Dorsolateral prefrontal cortex (tissue), 120 donors: ENCODE measurements at regions of chr13 and their contacts with region 1.

Region 1: DNA sequence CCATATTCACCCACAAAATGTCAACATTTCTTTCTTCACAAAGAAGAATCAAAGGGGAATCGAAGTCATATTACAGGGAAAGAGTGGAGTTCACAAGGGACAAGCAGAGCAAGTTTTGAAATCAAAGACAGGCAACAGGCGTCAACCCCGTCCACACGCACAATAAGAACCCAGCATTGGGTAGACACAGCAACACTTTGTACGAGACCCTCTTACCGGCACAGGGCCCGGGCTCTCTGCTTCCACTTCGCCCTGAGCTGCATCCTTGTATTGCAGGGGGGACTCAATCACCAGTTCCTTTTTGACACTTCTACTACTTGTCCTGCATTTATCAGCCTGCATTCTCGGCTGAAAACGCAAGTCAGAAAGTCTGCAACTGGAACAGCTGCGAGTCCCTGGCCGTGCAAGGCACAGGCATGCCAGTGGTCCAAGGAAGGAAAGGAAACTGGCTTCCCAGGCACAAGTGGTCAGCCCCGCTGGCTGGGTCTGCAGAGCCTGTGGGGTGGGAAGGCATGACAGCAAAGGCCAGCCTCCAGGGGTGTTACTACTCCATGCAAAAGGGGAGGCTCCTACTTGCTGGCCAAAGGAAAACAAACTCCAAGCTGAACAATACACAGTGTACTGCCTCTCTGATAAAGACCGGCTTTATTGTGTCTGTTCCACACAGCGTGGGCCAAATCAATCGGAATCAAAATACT is at the start of gene DOCK9:
- DNase-seq: peak; percentile 34 to 90 (median 82)
- H3K4me3 ChIP-seq: peak within 1 kb of the TSS; percentile 24 to 79 (median 62)
- H3K27ac ChIP-seq: peak within 1 kb of the TSS; percentile 68 to 99 (median 94)
- H3K27me3 ChIP-seq: no peaks in the 10 kb centered on the region
- CTCF ChIP-seq: peak in 25 of 56 donors; percentile 6 to 49 (median 17)
- total RNA-seq, gene DOCK9: 92.4 to 354 (median 139) TPM

Region 2: GRCh38 chr13:98890186-98890585 is 87.5 kb before region 1 on chr13:
- intact Hi-C with region 1: loop called (anchors 10 kb)
- DNase-seq: peak in 9 of 10 donors; percentile 39 to 76 (median 64)
- H3K4me3 ChIP-seq: peak overlapping the region in 1 of 59 donors; percentile 14
- H3K27ac ChIP-seq: peak overlapping the region in 41 of 59 donors; percentile 2 to 74 (median 48)
- H3K27me3 ChIP-seq: no peaks in the 10 kb centered on the region
- CTCF ChIP-seq: peak in 15 of 56 donors; percentile 5 to 49 (median 18)

Region 3: GRCh38 chr13:98923641-98924397 is 53.9 kb before region 1 on chr13:
- intact Hi-C with region 1: loop called (anchors 5 kb)
- DNase-seq: no peak
- H3K4me3 ChIP-seq: no peak overlapping the region
- H3K27ac ChIP-seq: peak overlapping the region in 52 of 59 donors; percentile 7 to 95 (median 86)
- H3K27me3 ChIP-seq: no peaks in the 10 kb centered on the region
- CTCF ChIP-seq: no peak

Region 4: GRCh38 chr13:99087096-99087953 is 109.6 kb after region 1 on chr13:
- intact Hi-C with region 1: loop called in 1 of 2 experiments (anchors 5 kb)
- DNase-seq: peak; percentile 85 to 97 (median 91)
- H3K4me3 ChIP-seq: peak overlapping the region; percentile 45 to 97 (median 82)
- H3K27ac ChIP-seq: peak overlapping the region; percentile 35 to 99 (median 94)
- H3K27me3 ChIP-seq: no peaks in the 10 kb centered on the region
- CTCF ChIP-seq: peak in 48 of 56 donors; percentile 9 to 65 (median 34)